Esophagus muscularis mucosa (tissue), 4 donors: ENCODE measurements at regions of chr12 and their contacts with region 1.

Region 1: GRCh38 chr12:115636546-115636945 is 640.9 kb downstream of the MED13L start:
- DNase-seq: no peak
- H3K4me3 ChIP-seq: no peak overlapping the region
- H3K27ac ChIP-seq: no peak overlapping the region
- H3K4me1 ChIP-seq: no peaks in the 10 kb centered on the region
- H3K27me3 ChIP-seq: peaks cover 0 to 2% (median 0%) of the 10 kb centered on the region in 4 donors
- CTCF ChIP-seq: no peak
- EP300 ChIP-seq: no peak
- POLR2A ChIP-seq: no peak

Region 2: GRCh38 chr12:114668151-114668885 is 968.2 kb before region 1 on chr12:
- intact Hi-C with region 1: loop called (anchors 2 kb)
- DNase-seq: no peak
- H3K4me3 ChIP-seq: peak overlapping the region; percentile 41 to 52 (median 46)
- H3K27ac ChIP-seq: peak overlapping the region; percentile 35 to 48 (median 44)
- H3K4me1 ChIP-seq: peaks cover 0 to 40% (median 27%) of the 10 kb centered on the region in 4 donors
- H3K27me3 ChIP-seq: peaks cover 0 to 73% (median 31%) of the 10 kb centered on the region in 4 donors
- CTCF ChIP-seq: peak; percentile 52 to 60 (median 56)
- EP300 ChIP-seq: no peak
- POLR2A ChIP-seq: no peak